ENCODE measurements at regions of chr16 and their contacts with region 1.

Region 1: DNA sequence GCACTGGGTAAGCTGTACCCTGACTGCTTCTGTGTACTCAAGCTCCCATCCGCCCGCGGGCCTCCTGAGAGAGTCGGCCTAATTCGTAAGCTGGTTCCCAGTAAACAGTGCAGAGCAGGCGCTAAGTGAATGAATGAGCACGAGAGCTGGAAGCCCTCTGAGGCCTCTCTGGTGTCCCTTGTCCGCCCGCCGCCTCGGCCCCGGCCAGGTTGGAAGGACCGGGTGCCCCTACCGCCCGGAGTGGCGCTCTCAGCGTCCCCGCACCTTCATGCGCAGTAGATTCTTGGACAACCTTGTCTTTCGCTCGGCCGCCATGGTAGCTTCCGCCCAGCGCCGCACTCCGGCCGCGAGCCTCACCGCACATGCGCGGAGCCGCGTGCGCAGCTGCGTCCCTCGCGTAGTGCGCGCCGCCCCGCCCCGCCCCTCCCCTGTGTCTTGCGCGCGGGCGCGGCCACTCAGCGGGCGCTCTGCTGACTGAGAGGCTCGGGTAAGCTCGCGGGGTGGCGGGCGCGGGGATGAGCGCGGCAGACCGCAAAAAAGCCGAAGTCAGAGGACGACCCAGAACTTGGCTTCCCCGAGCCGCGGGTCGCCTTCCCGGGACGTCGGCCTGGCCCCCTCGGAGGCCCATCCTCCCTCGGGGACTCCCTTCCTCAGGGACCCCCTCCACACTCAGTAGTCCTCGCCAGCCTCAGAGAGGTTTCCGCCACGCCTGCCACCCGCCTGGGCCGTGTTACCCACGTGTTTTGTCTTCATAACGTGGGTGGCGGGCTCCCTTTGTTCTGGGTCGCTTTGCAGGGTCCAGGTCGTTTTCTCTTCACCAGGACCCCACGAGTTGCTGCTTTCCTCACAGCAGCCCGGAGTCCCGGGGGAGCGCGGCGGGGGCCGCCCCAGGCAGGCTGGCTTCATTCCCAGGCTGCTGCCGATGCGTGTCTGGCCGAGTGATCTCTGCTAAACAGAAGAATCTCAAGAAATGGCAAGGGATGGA is at the start of gene MPHOSPH6:
- DNase-seq: peak; percentile 86
- ATAC-seq: peak; percentile 99
- H3K4me3 ChIP-seq: peak within 1 kb of the TSS; percentile 85
- H3K27ac ChIP-seq: peak within 1 kb of the TSS; percentile 88
- H3K4me1 ChIP-seq: peaks cover 2% of the 10 kb centered on the region; the same call in 1 of the 2 replicates
- H3K27me3 ChIP-seq: peaks cover 10% of the 10 kb centered on the region
- CTCF ChIP-seq: no peak; the same call in 1 of the 2 replicates
- POLR2A ChIP-seq: peak; percentile 70; the same call in 1 of the 2 replicates
- RAD21 ChIP-seq: no peak
- total RNA-seq, gene MPHOSPH6: 5.4 and 28.1 TPM in 2 replicates

Region 2: GRCh38 chr16:82011199-82011641 is 158.9 kb before region 1 on chr16 and contains the start of gene SDR42E1:
- CTCF ChIA-PET with region 1: no interaction called
- POLR2A ChIA-PET with region 1: no interaction called
- dilution Hi-C with region 1: no loop called
- in situ Hi-C with region 1: no loop called
- intact Hi-C with region 1: no loop called
- DNase-seq: no peak
- ATAC-seq: peak; percentile 27; the same call in 1 of the 2 replicates
- H3K4me3 ChIP-seq: peak within 1 kb of the TSS; percentile 11; the same call in 1 of the 2 replicates
- H3K27ac ChIP-seq: no peak within 1 kb of the TSS
- H3K4me1 ChIP-seq: no peaks in the 10 kb centered on the region
- H3K27me3 ChIP-seq: peaks cover 12% of the 10 kb centered on the region
- CTCF ChIP-seq: no peak
- POLR2A ChIP-seq: no peak
- RAD21 ChIP-seq: no peak
- total RNA-seq, gene SDR42E1: 0.28 and 0.72 TPM in 2 replicates

Region 3: DNA sequence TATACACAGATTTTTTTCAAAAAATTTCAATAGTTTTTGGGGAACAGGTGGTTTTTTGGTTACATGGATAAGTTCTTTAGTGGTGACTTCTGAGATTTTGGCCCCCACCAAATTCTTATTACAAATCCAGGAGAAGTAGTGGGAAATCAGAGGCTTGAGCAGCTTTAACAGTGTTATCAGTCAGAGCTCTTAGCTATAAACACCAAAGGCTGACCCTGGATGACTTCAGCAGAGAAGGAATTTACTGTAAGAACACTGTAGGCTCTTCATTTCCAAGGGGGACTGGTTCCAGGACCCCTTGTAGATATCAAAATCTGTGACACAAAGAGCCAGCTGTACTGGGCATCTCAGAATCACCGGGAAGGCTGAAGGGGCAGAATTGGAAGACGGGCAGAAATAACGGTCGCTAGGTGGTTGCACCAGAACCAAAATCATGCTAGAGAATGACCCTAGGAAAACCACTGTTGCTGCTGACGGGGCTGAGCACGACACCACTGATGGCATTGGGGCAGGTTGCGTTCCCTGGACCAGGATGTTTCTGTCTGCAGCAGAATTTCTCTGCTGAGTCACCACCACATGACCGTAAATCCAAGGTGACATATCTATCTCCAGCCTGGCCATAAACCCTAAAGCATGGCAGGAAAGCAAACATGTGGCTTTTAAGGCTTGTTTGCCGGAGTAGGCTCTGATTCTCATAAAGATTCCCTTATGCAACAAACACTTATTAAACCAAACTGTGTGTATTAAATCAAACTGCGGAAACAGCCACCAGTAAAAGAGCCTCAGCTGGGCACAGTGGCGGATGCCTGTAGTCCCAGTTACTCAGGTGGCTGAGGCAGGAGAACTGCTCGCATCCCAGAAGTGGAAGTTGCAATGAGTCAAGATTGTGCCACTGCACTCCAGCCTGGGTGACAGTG is 17.7 kb before region 1 on chr16:
- CTCF ChIA-PET with region 1: no interaction called
- POLR2A ChIA-PET with region 1: no interaction called
- dilution Hi-C with region 1: no loop called
- in situ Hi-C with region 1: no loop called
- intact Hi-C with region 1: loop called (anchors 2 kb)
- DNase-seq: peak; percentile 70
- ATAC-seq: peak; percentile 76
- H3K4me3 ChIP-seq: no peak overlapping the region
- H3K27ac ChIP-seq: peak overlapping the region; percentile 62; the same call in 1 of the 2 replicates
- H3K4me1 ChIP-seq: peaks cover 5% of the 10 kb centered on the region
- H3K27me3 ChIP-seq: no peaks in the 10 kb centered on the region
- CTCF ChIP-seq: no peak
- POLR2A ChIP-seq: no peak
- RAD21 ChIP-seq: no peak

Region 4: GRCh38 chr16:82384017-82384416 is 213.9 kb after region 1 on chr16:
- CTCF ChIA-PET with region 1: no interaction called
- POLR2A ChIA-PET with region 1: no interaction called
- dilution Hi-C with region 1: no loop called
- in situ Hi-C with region 1: no loop called
- intact Hi-C with region 1: no loop called
- DNase-seq: no peak
- ATAC-seq: no peak
- H3K4me3 ChIP-seq: no peak overlapping the region
- H3K27ac ChIP-seq: no peak overlapping the region
- H3K4me1 ChIP-seq: no peaks in the 10 kb centered on the region
- H3K27me3 ChIP-seq: no peaks in the 10 kb centered on the region
- CTCF ChIP-seq: no peak
- POLR2A ChIP-seq: no peak
- RAD21 ChIP-seq: no peak